Activated B cell treated with CpG ODN at 0.5 μM for 24 hours (primary cell): ENCODE measurements at regions of chr6 and their contacts with region 1.

Region 1: DNA sequence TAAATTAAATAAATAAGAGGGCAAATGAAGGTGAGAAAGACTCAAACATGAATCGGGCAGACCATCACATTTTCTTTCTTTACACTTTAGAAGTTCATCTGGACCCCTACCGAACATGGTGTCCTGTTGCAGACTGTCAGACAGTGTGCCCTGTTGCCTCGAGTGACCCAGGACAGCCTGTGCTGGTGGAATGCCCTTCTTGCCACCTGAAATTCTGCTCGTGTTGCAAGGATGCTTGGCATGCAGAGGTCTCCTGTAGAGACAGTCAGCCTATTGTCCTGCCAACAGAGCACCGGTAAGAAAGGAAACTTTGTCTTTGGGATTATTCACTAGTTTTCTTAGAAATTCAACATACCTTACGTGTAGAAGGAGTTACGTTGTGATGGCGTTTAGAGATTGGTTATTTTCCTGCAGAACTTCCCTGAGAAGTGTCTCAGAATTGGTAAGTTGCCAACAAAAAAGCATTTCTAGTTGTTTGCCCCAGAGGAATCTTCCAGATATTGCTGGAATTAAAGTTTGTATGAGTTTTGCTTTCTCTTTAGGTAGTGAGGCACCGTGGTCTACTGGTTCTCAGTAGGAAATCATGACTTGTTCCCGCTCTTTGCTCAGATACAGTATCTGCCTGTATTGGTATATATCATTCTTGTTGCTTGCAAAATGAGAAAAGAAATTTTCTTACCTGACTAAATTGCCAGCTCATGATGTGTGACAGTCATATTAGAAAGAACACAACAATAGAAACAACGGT is 70.1 kb downstream of the RNF144B start:
- DNase-seq: no peak
- ATAC-seq: no peak
- H3K4me3 Mint-ChIP-seq: no peak overlapping the region
- H3K27ac Mint-ChIP-seq: no peak overlapping the region
- H3K4me1 Mint-ChIP-seq: peaks cover 7% of the 10 kb centered on the region
- H3K27me3 Mint-ChIP-seq: no peaks in the 10 kb centered on the region
- CTCF ChIP-seq: no peak

Region 2: GRCh38 chr6:18415671-18416340 is 41.4 kb before region 1 on chr6:
- CTCF ChIA-PET with region 1: no interaction called
- POLR2A ChIA-PET with region 1: no interaction called
- intact Hi-C with region 1: loop called (anchors 5 kb)
- DNase-seq: no peak
- ATAC-seq: no peak
- H3K4me3 Mint-ChIP-seq: no peak overlapping the region
- H3K27ac Mint-ChIP-seq: no peak overlapping the region
- H3K4me1 Mint-ChIP-seq: peaks cover 41% of the 10 kb centered on the region
- H3K27me3 Mint-ChIP-seq: no peaks in the 10 kb centered on the region
- CTCF ChIP-seq: no peak